Left ventricle myocardium inferior (tissue), 1 donor: ENCODE measurements at regions of chr19 and their contacts with region 1.

Region 1: DNA sequence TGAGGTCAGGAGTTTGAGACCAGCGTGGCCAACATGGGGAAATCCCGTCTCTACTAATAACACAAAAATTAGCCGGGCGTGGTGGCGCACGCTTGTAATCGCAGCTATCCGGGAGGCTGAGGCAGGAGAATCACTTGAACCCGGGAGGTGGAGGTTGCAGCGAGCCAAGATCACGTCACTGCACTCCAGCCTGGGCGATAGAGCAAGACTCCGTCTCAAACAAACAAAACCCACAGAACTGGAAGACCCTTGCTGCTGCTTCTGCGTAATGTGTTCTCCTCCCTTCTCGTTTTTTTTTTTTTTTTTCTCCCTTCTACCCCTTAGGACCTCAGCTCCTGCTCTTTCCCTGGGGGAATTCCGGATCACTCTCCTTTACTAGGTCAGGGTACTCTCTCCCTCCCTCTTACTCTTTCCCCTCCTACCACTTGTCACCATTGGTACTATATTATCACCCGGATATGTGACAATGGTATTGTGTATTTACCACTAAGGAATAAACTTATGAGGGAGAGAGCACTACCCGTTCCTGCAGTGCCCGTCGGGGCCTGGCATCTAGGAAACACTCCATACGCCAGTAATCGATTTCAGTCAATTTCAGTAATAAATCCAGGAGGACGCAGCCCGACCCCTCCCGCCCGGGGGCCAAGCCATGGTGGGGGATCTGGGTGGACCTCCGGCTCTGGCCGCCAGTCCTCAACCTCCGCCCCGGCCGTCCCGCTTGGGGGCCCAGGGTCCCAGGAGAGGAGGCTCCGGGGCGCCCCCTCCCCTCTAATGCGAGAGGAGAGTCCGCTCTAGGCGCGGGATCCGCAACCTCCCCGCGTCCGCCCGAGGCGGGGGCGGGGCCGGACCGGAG is 429 bp upstream of the GARRE1 start:
- DNase-seq: peak; percentile 88
- H3K4me3 ChIP-seq: peak overlapping the region; percentile 87
- H3K27ac ChIP-seq: peak overlapping the region; percentile 96
- H3K4me1 ChIP-seq: peaks cover 40% of the 10 kb centered on the region
- H3K27me3 ChIP-seq: no peaks in the 10 kb centered on the region
- CTCF ChIP-seq: no peak

Region 2: DNA sequence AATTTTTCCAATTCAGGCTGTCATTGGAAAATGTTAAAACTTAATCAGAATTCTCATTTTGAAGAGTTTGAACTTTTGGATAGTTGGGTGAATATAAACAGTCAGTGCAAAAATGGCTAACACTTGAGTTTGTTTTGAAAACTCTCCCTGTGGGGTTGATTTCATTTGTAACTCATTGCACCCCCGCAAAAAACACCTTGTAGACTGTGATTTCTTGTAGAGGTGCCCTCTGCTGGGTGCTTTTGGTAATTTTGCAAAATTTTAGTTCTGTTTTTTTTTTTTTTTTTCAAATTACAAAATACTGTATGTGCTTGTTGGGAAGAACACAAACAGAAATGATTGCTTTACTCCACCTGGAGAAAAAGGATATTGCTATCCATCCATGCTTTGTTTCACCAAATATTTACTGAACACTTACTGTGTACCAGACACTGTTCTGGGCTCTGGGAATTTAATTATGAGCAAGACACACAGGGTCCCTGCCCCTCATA is 82.9 kb after region 1 on chr19:
- intact Hi-C with region 1: loop called (anchors 10 kb)
- DNase-seq: no peak
- H3K4me3 ChIP-seq: no peak overlapping the region
- H3K27ac ChIP-seq: peak overlapping the region; percentile 48
- H3K4me1 ChIP-seq: peaks cover 38% of the 10 kb centered on the region
- H3K27me3 ChIP-seq: no peaks in the 10 kb centered on the region
- CTCF ChIP-seq: peak; percentile 68